B cell (primary cell): ENCODE measurements at regions of chrX and their contacts with region 1.

Region 1: DNA sequence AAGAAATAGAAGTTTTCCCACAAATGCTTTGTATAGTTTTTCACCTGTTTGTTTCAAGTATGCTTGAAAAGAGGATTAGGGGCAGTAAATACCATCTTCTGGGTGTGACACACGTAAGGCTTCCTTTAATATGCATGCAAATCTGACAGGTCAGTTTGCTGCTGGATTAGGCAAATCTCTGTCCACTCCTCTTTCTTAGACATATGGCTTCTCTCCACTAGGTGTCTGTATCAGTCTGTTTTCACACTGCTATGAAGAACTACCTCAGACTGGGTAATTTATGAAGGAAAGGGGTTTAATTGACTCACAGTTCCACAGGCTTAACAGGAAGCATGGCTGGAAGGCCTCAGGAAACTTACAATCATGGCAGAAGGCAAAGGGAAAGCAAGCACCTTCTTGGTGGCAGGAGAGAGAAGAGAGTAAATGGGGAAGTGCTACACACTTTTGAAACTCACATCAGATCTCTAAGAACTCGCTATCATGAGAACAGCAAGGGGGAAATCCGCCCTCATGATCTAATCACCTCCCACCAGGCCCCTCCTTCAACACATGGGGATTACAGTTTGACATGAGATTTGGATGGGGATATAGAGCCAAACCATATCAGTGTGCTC is 66.9 kb downstream of the TAB3 start:
- DNase-seq: peak; percentile 68
- ATAC-seq: peak; percentile 73
- H3K4me3 ChIP-seq: no peak overlapping the region
- H3K4me3 Mint-ChIP-seq: peak overlapping the region; percentile 54
- H3K27ac ChIP-seq: peak overlapping the region; percentile 41 to 53
- H3K27ac Mint-ChIP-seq: peak overlapping the region; percentile 91
- H3K4me1 ChIP-seq: peaks cover 11% of the 10 kb centered on the region in 2 donors
- H3K4me1 Mint-ChIP-seq: peaks cover 27% of the 10 kb centered on the region
- H3K27me3 ChIP-seq: no peaks in the 10 kb centered on the region
- H3K27me3 Mint-ChIP-seq: no peaks in the 10 kb centered on the region
- CTCF ChIP-seq: no peak

Region 2: GRCh38 chrX:30735839-30736238 is 86.3 kb before region 1 on chrX:
- CTCF ChIA-PET with region 1: interaction called, 5 read pairs
- POLR2A ChIA-PET with region 1: no interaction called
- intact Hi-C with region 1: loop called (anchors 5 kb)
- DNase-seq: peak; percentile 65
- ATAC-seq: peak; percentile 43
- H3K4me3 ChIP-seq: no peak overlapping the region
- H3K4me3 Mint-ChIP-seq: no peak overlapping the region
- H3K27ac ChIP-seq: no peak overlapping the region
- H3K27ac Mint-ChIP-seq: no peak overlapping the region
- H3K4me1 ChIP-seq: no peaks in the 10 kb centered on the region
- H3K4me1 Mint-ChIP-seq: peaks cover 2% of the 10 kb centered on the region
- H3K27me3 ChIP-seq: no peaks in the 10 kb centered on the region
- H3K27me3 Mint-ChIP-seq: no peaks in the 10 kb centered on the region
- CTCF ChIP-seq: peak; percentile 79

Region 3: GRCh38 chrX:30935985-30936384 is 113.8 kb after region 1 on chrX:
- CTCF ChIA-PET with region 1: no interaction called
- POLR2A ChIA-PET with region 1: no interaction called
- intact Hi-C with region 1: no loop called
- DNase-seq: no peak
- ATAC-seq: no peak
- H3K4me3 ChIP-seq: no peak overlapping the region
- H3K4me3 Mint-ChIP-seq: no peak overlapping the region
- H3K27ac ChIP-seq: no peak overlapping the region
- H3K27ac Mint-ChIP-seq: no peak overlapping the region
- H3K4me1 ChIP-seq: no peaks in the 10 kb centered on the region
- H3K4me1 Mint-ChIP-seq: no peaks in the 10 kb centered on the region
- H3K27me3 ChIP-seq: no peaks in the 10 kb centered on the region
- H3K27me3 Mint-ChIP-seq: no peaks in the 10 kb centered on the region
- CTCF ChIP-seq: no peak